ENCODE measurements at regions of chr2 and their contacts with region 1.

Region 1: DNA sequence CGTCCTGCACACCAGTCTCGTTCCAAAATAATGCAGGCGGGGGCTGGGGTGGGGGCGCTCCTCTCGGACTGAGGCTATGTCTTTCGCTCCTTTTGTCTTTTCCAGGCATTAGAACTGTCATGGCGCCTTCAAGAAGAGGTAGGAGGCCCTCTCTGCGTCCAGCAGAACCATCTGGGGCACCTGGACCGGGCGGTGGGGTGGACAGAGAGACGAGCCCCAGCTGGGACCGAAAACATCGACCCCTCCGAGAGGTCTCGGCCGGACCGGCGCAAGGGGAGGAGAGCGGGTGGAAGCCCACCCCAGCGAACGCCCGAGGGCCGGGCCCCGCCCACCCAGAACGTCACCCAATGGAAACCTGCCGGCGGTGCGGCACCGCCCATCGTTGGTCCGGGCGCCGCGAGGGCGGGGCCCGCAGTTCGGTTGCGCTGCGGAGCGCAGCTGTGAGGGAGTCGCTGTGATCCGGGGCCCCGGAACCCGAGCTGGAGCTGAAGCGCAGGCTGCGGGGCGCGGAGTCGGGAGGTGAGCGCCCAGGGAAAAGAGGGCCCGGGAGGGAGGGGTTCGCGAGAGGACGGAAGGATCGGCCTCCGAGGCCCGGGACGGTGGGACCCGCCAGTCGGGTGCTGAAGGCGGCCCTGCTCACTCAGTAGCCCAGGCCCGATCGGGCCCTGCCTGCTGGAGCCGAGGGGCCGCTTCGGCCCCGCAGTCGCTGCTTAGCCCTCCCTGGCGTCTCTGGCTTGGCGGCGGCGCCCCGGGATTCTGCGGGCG is at the start of gene NRBP1:
- DNase-seq: peak; percentile 29
- H3K4me3 ChIP-seq: peak within 1 kb of the TSS; percentile 82
- CTCF ChIP-seq: no peak

Region 2: GRCh38 chr2:26901326-26902183 is 526.8 kb before region 1 on chr2:
- CTCF ChIA-PET with region 1: no interaction called
- POLR2A ChIA-PET with region 1: no interaction called
- DNase-seq: no peak
- H3K4me3 ChIP-seq: no peak overlapping the region
- CTCF ChIP-seq: no peak

Region 3: GRCh38 chr2:27390822-27391679 is 37.3 kb before region 1 on chr2:
- CTCF ChIA-PET with region 1: no interaction called
- POLR2A ChIA-PET with region 1: no interaction called
- DNase-seq: no peak
- H3K4me3 ChIP-seq: no peak overlapping the region
- CTCF ChIP-seq: no peak

Region 4: GRCh38 chr2:27409321-27410073 is 18.9 kb before region 1 on chr2 and contains the start of gene PPM1G:
- CTCF ChIA-PET with region 1: interaction called, 7 read pairs
- POLR2A ChIA-PET with region 1: interaction called, 18 read pairs
- DNase-seq: peak; percentile 34
- H3K4me3 ChIP-seq: peak within 1 kb of the TSS; percentile 88
- CTCF ChIP-seq: no peak

Region 5: DNA sequence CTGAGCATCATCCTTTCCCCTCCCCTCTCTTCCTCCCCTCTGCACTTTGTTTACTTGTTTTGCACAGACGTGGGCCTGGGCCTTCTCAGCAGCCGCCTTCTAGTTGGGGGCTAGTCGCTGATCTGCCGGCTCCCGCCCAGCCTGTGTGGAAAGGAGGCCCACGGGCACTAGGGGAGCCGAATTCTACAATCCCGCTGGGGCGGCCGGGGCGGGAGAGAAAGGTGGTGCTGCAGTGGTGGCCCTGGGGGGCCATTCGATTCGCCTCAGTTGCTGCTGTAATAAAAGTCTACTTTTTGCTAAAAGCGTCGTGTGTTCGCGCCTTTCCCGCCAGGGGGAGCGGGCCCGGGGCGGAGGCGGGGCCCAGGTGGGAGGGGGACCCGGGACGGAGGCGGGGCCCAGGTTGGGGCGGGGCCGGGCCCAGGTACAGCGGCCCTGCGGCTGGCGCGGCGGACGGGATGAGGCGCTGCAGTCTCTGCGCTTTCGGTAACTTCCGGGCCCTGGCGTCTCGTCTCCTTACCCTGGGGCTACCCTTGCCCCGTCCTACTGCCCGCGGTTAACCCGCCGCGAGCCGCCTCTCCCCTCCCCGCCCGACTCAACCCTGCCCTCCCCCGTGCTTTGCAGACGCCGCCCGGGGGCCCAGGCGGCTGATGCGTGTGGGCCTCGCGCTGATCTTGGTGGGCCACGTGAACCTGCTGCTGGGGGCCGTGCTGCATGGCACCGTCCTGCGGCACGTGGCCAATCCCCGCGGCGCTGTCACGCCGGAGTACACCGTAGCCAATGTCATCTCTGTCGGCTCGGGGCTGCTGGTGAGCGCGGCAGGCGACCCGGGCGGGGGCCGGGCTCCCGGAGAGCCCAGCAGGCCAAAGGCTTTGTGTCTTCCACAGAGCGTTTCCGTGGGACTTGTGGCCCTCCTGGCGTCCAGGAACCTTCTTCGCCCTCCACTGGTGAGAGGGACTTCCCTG is 13.8 kb after region 1 on chr2 and contains the start of gene KRTCAP3:
- CTCF ChIA-PET with region 1: interaction called, 10 read pairs
- POLR2A ChIA-PET with region 1: interaction called, 17 read pairs
- DNase-seq: no peak
- H3K4me3 ChIP-seq: no peak within 1 kb of the TSS
- CTCF ChIP-seq: no peak